Activated naive CD4-positive, alpha-beta T cell treated with anti-CD3 and anti-CD28 coated beads, Interleukin-2, amount 10 ng/mL, durations not matched to agents 7 days and 5 days (primary cell): ENCODE measurements at regions of chr1 and their contacts with region 1.

Region 1: GRCh38 chr1:39538588-39539465 is 37.8 kb downstream of the PABPC4 start:
- DNase-seq: peak; percentile 62
- H3K4me3 Mint-ChIP-seq: no peak overlapping the region
- H3K27ac Mint-ChIP-seq: peak overlapping the region; percentile 78
- H3K4me1 Mint-ChIP-seq: no peaks in the 10 kb centered on the region
- H3K27me3 Mint-ChIP-seq: no peaks in the 10 kb centered on the region

Region 2: DNA sequence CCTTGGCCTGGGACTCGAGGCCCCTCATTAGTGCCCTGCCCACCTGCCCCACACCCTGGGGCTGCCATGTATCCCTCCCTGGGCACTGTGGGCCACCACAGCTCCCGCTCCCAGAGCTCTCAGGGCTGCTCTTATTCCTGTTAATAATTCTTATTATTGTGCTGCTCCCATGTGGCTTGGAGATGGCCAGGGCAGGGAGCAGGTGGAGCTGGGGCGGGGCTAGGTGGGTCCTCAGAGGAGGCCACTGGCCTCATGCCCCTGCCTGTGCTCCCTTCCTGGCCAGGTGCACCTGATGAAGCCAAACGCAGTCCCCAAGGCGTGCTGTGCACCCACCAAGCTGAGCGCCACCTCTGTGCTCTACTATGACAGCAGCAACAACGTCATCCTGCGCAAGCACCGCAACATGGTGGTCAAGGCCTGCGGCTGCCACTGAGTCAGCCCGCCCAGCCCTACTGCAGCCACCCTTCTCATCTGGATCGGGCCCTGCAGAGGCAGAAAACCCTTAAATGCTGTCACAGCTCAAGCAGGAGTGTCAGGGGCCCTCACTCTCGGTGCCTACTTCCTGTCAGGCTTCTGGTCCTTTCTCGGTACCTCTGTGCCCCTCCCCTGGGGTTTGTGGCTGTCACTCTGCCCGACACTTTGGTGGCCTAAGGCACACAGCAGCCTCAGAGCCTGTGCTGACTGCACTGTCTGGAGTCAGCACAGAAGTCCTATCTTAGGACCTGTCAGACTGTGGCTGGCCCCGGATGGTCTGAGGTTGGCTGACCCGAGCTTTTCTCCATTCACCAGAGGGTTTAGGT is 13.3 kb before region 1 on chr1:
- CTCF ChIA-PET with region 1: interaction called, 11 read pairs
- DNase-seq: peak; percentile 68
- H3K4me3 Mint-ChIP-seq: no peak overlapping the region
- H3K27ac Mint-ChIP-seq: peak overlapping the region; percentile 7
- H3K4me1 Mint-ChIP-seq: peaks cover 14% of the 10 kb centered on the region
- H3K27me3 Mint-ChIP-seq: no peaks in the 10 kb centered on the region

Region 3: DNA sequence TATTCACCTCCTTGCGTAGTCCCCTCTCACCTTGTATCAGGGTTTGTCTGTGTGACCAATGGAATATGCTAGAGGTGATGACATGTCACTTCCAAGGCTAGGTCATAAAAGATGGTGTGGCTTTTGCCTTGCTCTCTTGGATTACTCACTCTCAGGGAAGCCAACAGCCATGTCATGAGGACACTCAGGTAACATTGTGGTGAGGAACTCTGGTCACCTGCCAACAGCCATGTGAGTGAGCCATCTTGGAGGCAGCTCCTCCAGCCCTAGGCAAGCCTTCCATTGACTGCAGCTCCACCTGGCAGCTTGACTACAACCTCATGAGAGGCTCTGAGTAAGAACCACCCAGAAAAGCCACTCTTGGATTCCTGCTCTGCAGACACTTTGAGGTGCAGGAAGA is 111.6 kb after region 1 on chr1:
- CTCF ChIA-PET with region 1: no interaction called
- DNase-seq: no peak
- H3K4me3 Mint-ChIP-seq: no peak overlapping the region
- H3K27ac Mint-ChIP-seq: no peak overlapping the region
- H3K4me1 Mint-ChIP-seq: peaks cover 5% of the 10 kb centered on the region
- H3K27me3 Mint-ChIP-seq: peaks cover 24% of the 10 kb centered on the region